AG04449 (cell line): ENCODE measurements at regions of chr15 and their contacts with region 1.

Region 1: DNA sequence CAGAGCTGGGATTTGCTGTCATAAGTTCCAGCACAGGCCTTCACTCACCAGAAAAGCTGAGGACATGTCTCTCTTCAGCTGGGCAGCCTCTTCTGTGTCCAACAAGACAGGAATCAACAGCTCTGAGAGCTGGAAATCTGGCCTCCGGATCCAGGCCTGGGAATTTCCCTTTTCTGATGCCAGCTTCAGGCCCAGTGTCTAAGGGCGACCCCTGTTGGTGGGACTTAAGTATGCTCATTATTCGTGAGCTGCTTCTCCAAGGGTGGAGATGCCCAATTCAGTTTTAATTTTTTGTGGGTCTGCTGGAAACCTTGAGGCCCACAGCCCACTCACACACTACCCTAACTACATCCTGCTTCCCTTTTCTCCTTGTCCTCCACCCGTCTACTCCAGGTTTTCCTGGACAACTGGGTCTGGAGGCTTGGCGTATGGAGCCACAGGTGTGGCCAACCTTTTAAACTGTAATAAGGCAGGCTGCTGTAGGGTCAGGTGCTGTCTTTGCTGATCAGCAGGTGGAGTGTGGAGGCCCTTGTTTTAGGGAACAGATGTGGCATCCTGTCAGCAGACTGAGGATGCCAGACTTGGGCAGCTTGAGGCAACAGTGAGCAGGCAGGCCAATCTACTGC is 2.6 kb upstream of the CEMIP start:
- DNase-seq: peak; percentile 64
- H3K4me3 ChIP-seq: no peak overlapping the region
- CTCF ChIP-seq: peak; percentile 79

Region 2: DNA sequence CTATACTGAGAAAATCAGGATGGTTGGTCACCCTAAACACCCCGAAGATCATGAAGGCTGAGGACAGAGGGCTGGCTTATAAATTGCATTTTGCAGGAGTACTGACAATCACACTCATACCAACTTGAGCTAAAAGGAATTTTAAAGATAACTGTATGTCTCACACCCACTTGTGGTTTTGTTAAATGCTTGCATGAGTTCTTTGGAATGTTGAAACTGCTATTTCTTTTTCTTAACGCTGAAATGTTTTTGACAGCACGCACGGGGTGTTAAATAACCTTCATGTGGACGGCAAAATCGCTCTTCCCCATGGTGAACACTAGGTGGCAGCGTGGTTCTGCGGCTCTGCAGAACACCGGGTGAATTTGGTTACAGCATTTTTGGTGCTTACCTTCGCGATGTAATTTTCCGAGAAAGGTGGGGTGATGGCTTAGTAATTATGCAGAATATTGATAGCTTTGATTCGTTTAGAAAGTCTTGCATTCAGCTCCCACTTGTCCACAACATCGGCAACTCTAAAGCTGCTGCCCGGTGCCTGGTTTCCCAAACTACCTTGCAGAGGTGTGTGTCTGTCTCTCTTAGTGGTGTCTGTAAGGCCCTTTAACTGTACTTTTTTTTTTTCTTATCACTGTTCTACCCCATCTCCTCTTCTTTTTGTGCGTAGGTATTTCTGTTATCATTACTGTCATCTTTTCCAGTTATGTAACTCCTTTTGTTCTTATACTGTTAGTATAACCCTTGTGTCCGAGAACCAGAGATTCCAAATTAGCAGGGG is 320.7 kb before region 1 on chr15:
- CTCF ChIA-PET with region 1: interaction called, 200 read pairs
- POLR2A ChIA-PET with region 1: interaction called, 13 read pairs
- DNase-seq: peak; percentile 87
- H3K4me3 ChIP-seq: no peak overlapping the region
- CTCF ChIP-seq: peak; percentile 83

Region 3: DNA sequence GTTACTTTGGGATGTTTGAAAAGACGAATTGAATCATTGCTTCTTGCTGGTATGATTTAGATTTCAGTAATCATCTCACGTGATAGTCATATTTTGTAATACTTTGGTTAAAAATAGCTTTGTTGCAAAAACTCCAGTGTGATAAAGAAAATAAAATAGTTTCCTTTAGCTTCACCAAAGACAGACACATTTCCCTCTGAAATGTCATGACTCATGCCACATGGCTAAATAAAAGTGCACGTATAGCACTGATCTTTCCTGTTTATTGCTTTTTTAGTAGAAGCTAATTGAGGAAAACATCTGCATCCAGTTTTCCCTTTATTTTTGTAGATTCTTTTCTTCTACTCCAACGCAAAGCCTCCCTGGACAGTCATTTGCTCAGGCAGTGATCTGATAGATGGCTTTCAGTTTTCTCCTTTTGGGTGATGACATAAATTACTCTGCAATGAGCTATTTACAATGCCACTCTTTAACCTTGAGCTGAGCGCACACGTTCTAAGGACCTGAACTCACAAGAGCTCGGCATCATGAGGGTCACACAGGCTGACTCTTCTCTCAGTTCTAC is 287.4 kb before region 1 on chr15:
- CTCF ChIA-PET with region 1: interaction called, 28 read pairs
- POLR2A ChIA-PET with region 1: interaction called, 16 read pairs
- DNase-seq: peak; percentile 84
- H3K4me3 ChIP-seq: no peak overlapping the region
- CTCF ChIP-seq: no peak

Region 4: DNA sequence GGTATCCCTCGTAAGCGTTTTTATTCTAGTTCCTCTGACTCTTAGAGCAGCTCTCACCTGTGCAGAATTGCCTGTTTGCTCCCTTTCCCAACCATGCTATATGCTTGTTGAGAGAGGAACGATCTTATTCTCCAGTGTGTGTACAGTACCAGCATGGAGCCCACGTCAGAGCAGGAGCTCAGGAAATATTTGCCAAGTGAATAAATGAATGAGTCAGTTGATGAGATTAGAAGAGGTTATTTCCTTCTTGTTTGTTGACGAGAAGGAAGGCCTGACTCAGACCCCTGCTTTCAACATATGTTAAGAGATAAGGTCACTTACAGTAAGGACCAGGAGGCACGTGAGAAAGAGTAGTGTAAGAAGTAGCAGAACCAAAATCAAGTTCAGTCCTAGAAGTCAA is 187.7 kb before region 1 on chr15:
- CTCF ChIA-PET with region 1: interaction called, 16 read pairs
- POLR2A ChIA-PET with region 1: no interaction called
- DNase-seq: peak; percentile 90
- H3K4me3 ChIP-seq: no peak overlapping the region
- CTCF ChIP-seq: no peak

Region 5: GRCh38 chr15:80660122-80660521 is 116.4 kb before region 1 on chr15:
- CTCF ChIA-PET with region 1: interaction called, 57 read pairs
- POLR2A ChIA-PET with region 1: interaction called, 4 read pairs
- DNase-seq: no peak
- H3K4me3 ChIP-seq: no peak overlapping the region
- CTCF ChIP-seq: peak; percentile 65

Region 6: GRCh38 chr15:80752174-80752573 is 24.4 kb before region 1 on chr15:
- CTCF ChIA-PET with region 1: interaction called, 14 read pairs
- POLR2A ChIA-PET with region 1: no interaction called
- DNase-seq: no peak
- H3K4me3 ChIP-seq: no peak overlapping the region
- CTCF ChIP-seq: no peak

Region 7: GRCh38 chr15:80804965-80805495 is 28.5 kb after region 1 on chr15:
- CTCF ChIA-PET with region 1: interaction called, 10 read pairs
- POLR2A ChIA-PET with region 1: interaction called, 3 read pairs
- DNase-seq: no peak
- H3K4me3 ChIP-seq: no peak overlapping the region
- CTCF ChIP-seq: no peak

Region 8: GRCh38 chr15:80925597-80926059 is 149.1 kb after region 1 on chr15:
- CTCF ChIA-PET with region 1: no interaction called
- POLR2A ChIA-PET with region 1: no interaction called
- DNase-seq: no peak
- H3K4me3 ChIP-seq: no peak overlapping the region
- CTCF ChIP-seq: no peak

Region 9: GRCh38 chr15:81054236-81054635 is 277.7 kb after region 1 on chr15:
- CTCF ChIA-PET with region 1: no interaction called
- POLR2A ChIA-PET with region 1: no interaction called
- DNase-seq: peak; percentile 41
- H3K4me3 ChIP-seq: no peak overlapping the region
- CTCF ChIP-seq: no peak